ENCODE measurements at regions of chrX and their contacts with region 1.

Region 1: GRCh38 chrX:52923781-52924241 is 26.7 kb downstream of the FAM156B start:
- H3K4me3 ChIP-seq: no peak overlapping the region
- H3K27ac ChIP-seq: no peak overlapping the region
- H3K4me1 ChIP-seq: no peaks in the 10 kb centered on the region
- CTCF ChIP-seq: no peak

Region 2: GRCh38 chrX:52934707-52935469 is 11.1 kb after region 1 on chrX:
- CTCF ChIA-PET with region 1: interaction called, 3 read pairs
- POLR2A ChIA-PET with region 1: interaction called, 13 read pairs
- H3K4me3 ChIP-seq: peak overlapping the region; percentile 90
- H3K27ac ChIP-seq: peak overlapping the region; percentile 80
- H3K4me1 ChIP-seq: no peaks in the 10 kb centered on the region
- CTCF ChIP-seq: peak; percentile 100

Region 3: DNA sequence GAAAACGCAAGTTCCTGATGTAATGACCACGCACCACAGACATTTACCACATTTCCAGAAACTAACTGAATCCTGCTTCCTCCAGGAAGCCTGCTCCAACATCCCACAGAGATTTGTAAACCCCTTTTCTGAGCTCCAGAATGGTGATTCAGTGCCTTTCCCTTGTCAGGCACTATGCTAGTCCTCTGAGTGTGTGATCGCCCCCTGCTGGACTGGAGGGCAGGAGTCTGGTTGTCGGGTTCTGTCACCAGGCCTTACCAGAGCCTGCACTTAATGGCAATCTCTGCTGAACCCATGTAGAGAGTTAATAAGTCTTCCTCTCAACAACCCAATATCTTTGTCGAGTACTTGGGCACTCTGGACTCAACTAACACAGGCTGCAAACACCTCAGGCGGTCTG is 315.7 kb after region 1 on chrX:
- CTCF ChIA-PET with region 1: no interaction called
- POLR2A ChIA-PET with region 1: no interaction called
- H3K4me3 ChIP-seq: no peak overlapping the region
- H3K27ac ChIP-seq: no peak overlapping the region
- H3K4me1 ChIP-seq: no peaks in the 10 kb centered on the region
- CTCF ChIP-seq: no peak